ENCODE measurements at regions of chr4 and their contacts with region 1.

Region 1: GRCh38 chr4:139656614-139657486 is 8.8 kb upstream of the MGST2 start:
- DNase-seq: no peak
- H3K4me3 ChIP-seq: no peak overlapping the region
- CTCF ChIP-seq: peak; percentile 86

Region 2: GRCh38 chr4:139319571-139319970 is 337.3 kb before region 1 on chr4:
- CTCF ChIA-PET with region 1: no interaction called
- POLR2A ChIA-PET with region 1: no interaction called
- DNase-seq: no peak
- H3K4me3 ChIP-seq: no peak overlapping the region
- CTCF ChIP-seq: no peak

Region 3: DNA sequence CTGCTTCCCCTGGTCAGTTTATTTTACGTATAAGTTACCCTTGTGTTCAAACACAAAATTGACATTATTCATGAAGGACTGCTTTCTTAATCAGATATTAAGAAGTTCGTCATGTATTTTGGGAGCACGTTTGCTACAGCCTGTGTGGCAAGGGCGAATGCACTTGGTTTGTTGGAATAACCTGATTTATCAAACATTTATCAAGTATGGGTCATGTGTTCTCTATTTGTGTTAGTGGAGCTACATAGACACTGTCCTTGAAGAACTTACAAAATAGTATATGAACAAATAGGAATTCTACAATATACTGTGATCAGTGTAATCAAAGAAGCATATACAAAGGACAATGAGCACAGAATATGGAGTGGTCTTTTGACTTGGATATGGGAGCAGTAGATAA is 180.5 kb before region 1 on chr4:
- CTCF ChIA-PET with region 1: no interaction called
- POLR2A ChIA-PET with region 1: no interaction called
- DNase-seq: no peak
- H3K4me3 ChIP-seq: no peak overlapping the region
- CTCF ChIP-seq: no peak

Region 4: GRCh38 chr4:139582044-139582443 is 74.8 kb before region 1 on chr4:
- CTCF ChIA-PET with region 1: interaction called, 51 read pairs
- POLR2A ChIA-PET with region 1: no interaction called
- DNase-seq: no peak
- H3K4me3 ChIP-seq: no peak overlapping the region
- CTCF ChIP-seq: peak; percentile 3

Region 5: GRCh38 chr4:139628184-139629012 is 28.5 kb before region 1 on chr4:
- CTCF ChIA-PET with region 1: interaction called, 116 read pairs
- POLR2A ChIA-PET with region 1: no interaction called
- DNase-seq: no peak
- H3K4me3 ChIP-seq: no peak overlapping the region
- CTCF ChIP-seq: no peak

Region 6: GRCh38 chr4:139642364-139642763 is 14.5 kb before region 1 on chr4:
- CTCF ChIA-PET with region 1: interaction called, 84 read pairs
- POLR2A ChIA-PET with region 1: no interaction called
- DNase-seq: peak; percentile 51
- H3K4me3 ChIP-seq: no peak overlapping the region
- CTCF ChIP-seq: no peak

Region 7: DNA sequence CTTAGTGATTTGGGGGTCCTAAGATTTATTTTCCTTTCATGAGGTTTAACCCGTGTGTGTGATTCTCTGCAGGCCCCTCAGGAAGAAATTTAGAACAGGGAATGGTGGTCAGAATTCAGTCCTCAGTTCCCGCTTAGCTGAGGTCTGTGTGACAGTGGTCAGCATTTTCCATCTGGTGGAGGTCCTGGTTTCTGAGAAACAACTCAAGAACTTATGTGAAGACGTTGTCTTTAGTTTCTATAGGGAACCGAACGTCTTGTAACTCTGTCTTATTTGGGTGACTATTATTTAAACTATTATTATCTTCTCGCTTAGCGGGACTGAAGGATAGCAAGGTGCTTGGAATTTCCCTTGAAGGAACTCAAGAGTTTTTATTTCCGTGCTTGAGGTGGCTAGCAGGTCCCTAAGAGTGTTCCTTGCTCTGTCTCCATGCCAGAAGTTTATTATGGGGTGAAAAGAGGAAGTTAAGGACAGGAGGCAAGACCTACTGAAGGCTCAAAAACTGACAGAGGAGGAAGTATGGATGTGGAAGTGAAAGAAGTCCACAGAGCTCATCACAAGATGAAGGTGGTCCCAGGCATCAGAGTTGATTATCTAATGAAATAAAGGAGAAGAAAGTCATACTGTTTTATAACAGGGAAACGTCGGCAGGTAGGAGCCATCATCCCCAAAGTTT is 18.2 kb after region 1 on chr4:
- CTCF ChIA-PET with region 1: interaction called, 43 read pairs
- POLR2A ChIA-PET with region 1: no interaction called
- DNase-seq: no peak
- H3K4me3 ChIP-seq: no peak overlapping the region
- CTCF ChIP-seq: no peak

Measured in AG04449 (cell line).